ENCODE measurements at regions of chr3 and their contacts with region 1.

Region 1: GRCh38 chr3:129824926-129825541 is 68.5 kb downstream of the TMCC1 start:
- DNase-seq: peak in 29 of 42 donors; percentile 18 to 84 (median 51)

Region 2: GRCh38 chr3:129650256-129650872 is 174.7 kb before region 1 on chr3:
- intact Hi-C with region 1: loop called (anchors 2 kb)
- DNase-seq: peak; percentile 49 to 91 (median 80)

Region 3: DNA sequence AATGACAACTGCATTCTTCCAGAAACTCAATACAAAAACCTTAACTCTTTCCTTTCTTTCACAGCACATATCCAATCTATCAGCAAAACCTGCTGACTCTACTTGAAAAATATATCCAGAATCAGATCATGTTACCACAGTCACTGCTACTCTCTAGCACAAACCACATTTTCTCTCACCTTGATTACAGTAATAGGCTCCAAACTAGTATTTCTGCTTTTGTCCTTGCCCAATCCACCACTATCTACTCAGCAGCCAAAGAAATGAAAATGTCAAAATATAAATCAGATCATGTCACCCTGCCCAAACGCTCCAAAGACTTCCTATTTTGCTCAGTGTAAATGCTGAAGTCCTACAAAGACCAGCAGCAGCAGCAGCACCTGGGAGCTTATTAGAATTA is 53.3 kb after region 1 on chr3:
- intact Hi-C with region 1: no loop called
- DNase-seq: no peak

Region 4: GRCh38 chr3:129934234-129935123 is 109.4 kb after region 1 on chr3:
- intact Hi-C with region 1: loop called (anchors 2 kb)
- DNase-seq: peak in 37 of 42 donors; percentile 11 to 79 (median 48)